ENCODE measurements at regions of chr17 and their contacts with region 1.

Region 1: GRCh38 chr17:10729334-10730193 is at the start of gene TMEM220:
- DNase-seq: peak; percentile 80
- H3K4me3 ChIP-seq: peak within 1 kb of the TSS; percentile 63 to 74 (median 68)
- H3K27ac ChIP-seq: peak within 1 kb of the TSS; percentile 59
- H3K4me1 ChIP-seq: peaks cover 6% of the 10 kb centered on the region
- H3K27me3 ChIP-seq: peaks cover 0 to 1% of the 10 kb centered on the region in 2 experiments
- CTCF ChIP-seq: no peak
- POLR2A ChIP-seq: no peak
- total RNA-seq, gene TMEM220: 10.4 and 11.2 TPM in 2 replicates

Region 2: GRCh38 chr17:10697092-10698081 is 32.2 kb before region 1 on chr17 and contains the starts of genes ADPRM and SCO1:
- CTCF ChIA-PET with region 1: interaction called, 3 read pairs
- POLR2A ChIA-PET with region 1: no interaction called
- dilution Hi-C with region 1: no loop called
- intact Hi-C with region 1: loop called (anchors 1 kb)
- DNase-seq: peak; percentile 93
- H3K4me3 ChIP-seq: peak within 1 kb of the TSS; percentile 74 to 92 (median 85)
- H3K27ac ChIP-seq: peak within 1 kb of the TSS; percentile 94
- H3K4me1 ChIP-seq: peaks cover 20% of the 10 kb centered on the region
- H3K27me3 ChIP-seq: no peaks in the 10 kb centered on the region
- CTCF ChIP-seq: peak; percentile 20 to 59
- POLR2A ChIP-seq: peak; percentile 85
- total RNA-seq, gene ADPRM: 7.6 and 7.9 TPM in 2 replicates
- total RNA-seq, gene SCO1: 28.0 and 30.8 TPM in 2 replicates